ENCODE measurements at regions of chr17 and their contacts with region 1.

Region 1: GRCh38 chr17:81460856-81461460 is 51.6 kb downstream of the ACTG1 start:
- DNase-seq: no peak
- ATAC-seq: no peak
- H3K4me3 ChIP-seq: no peak overlapping the region
- H3K27ac ChIP-seq: no peak overlapping the region
- H3K4me1 ChIP-seq: peaks cover 10% of the 10 kb centered on the region; the same call in 2 of the 3 replicates
- CTCF ChIP-seq: no peak
- EP300 ChIP-seq: no peak
- POLR2A ChIP-seq: no peak
- RAD21 ChIP-seq: no peak

Region 2: GRCh38 chr17:81412490-81413093 is 48.4 kb before region 1 on chr17:
- CTCF ChIA-PET with region 1: no interaction called
- POLR2A ChIA-PET with region 1: no interaction called
- DNase-seq: no peak
- ATAC-seq: no peak
- H3K4me3 ChIP-seq: no peak overlapping the region
- H3K27ac ChIP-seq: peak overlapping the region in 1 of 2 experiments; percentile 45; a peak in 3 of 6 replicates
- H3K4me1 ChIP-seq: peaks cover 24% of the 10 kb centered on the region
- CTCF ChIP-seq: no peak
- EP300 ChIP-seq: no peak
- POLR2A ChIP-seq: no peak
- RAD21 ChIP-seq: no peak

Region 3: GRCh38 chr17:81471804-81472456 is 11.0 kb after region 1 on chr17:
- CTCF ChIA-PET with region 1: interaction called, 14 read pairs
- POLR2A ChIA-PET with region 1: no interaction called
- DNase-seq: peak; percentile 80 to 94
- ATAC-seq: peak in 1 of 2 experiments; percentile 71; a peak in 3 of 6 replicates
- H3K4me3 ChIP-seq: no peak overlapping the region
- H3K27ac ChIP-seq: no peak overlapping the region
- H3K4me1 ChIP-seq: no peaks in the 10 kb centered on the region
- CTCF ChIP-seq: no peak
- EP300 ChIP-seq: no peak
- POLR2A ChIP-seq: no peak
- RAD21 ChIP-seq: no peak

Region 4: DNA sequence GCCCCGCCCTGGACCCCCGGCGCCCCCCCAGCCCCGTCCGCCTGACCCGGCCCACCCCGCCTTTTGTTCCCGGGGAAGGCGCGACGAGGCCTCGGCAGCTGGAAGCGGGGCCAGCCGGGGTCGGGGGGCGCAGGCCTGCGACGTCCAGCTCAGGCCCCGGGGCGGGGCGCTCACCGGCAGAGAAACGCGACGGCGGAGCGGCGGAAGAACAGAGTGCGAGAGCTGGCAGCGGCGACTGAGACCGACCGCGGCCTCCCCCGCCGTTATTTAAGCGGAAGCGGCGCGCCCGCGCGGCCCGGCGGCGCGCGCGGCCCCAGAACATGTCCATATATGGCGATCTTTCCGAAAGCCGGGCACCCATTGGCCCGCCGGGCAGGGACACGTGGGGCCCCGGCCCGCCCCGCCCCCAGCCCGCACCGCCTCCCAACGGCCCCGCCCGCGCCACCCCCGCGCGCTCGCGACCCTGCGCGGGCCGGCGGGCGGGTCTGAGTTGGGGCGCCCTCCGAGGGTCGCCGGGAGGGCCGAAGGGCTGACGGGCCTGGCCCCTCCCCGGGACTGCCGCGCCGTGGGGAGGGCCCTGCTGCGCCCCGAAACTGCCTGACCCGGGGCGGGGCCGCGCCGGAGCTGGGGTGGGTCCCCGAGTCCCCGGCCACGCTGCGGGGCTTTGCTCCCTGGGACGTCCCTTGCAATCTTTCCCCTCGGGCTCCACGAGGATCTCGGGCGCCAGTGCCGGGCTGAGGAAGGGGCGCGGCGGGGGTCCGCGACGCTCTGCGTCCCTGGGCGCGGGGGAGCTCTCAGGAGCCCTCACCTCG is 51.8 kb after region 1 on chr17 and contains the start of gene ACTG1:
- CTCF ChIA-PET with region 1: no interaction called
- POLR2A ChIA-PET with region 1: no interaction called
- DNase-seq: peak; percentile 92 to 95
- ATAC-seq: peak; percentile 30 to 31
- H3K4me3 ChIP-seq: peak within 1 kb of the TSS; percentile 83
- H3K27ac ChIP-seq: peak within 1 kb of the TSS; percentile 99
- H3K4me1 ChIP-seq: peaks cover 29% of the 10 kb centered on the region
- CTCF ChIP-seq: no peak
- EP300 ChIP-seq: no peak
- POLR2A ChIP-seq: peak; percentile 98
- RAD21 ChIP-seq: no peak
- polyA plus RNA-seq, gene ACTG1: 2,042 and 2,306 TPM in 2 replicates